ENCODE measurements at regions of chr19 and their contacts with region 1.

Region 1: GRCh38 chr19:46924874-46925547 is 64.2 kb downstream of the ARHGAP35 start:
- DNase-seq: no peak
- ATAC-seq: peak; percentile 54 to 91
- H3K4me3 ChIP-seq: no peak overlapping the region
- H3K27ac ChIP-seq: no peak overlapping the region
- H3K4me1 ChIP-seq: peaks cover 23% of the 10 kb centered on the region
- H3K27me3 ChIP-seq: no peaks in the 10 kb centered on the region

Region 2: DNA sequence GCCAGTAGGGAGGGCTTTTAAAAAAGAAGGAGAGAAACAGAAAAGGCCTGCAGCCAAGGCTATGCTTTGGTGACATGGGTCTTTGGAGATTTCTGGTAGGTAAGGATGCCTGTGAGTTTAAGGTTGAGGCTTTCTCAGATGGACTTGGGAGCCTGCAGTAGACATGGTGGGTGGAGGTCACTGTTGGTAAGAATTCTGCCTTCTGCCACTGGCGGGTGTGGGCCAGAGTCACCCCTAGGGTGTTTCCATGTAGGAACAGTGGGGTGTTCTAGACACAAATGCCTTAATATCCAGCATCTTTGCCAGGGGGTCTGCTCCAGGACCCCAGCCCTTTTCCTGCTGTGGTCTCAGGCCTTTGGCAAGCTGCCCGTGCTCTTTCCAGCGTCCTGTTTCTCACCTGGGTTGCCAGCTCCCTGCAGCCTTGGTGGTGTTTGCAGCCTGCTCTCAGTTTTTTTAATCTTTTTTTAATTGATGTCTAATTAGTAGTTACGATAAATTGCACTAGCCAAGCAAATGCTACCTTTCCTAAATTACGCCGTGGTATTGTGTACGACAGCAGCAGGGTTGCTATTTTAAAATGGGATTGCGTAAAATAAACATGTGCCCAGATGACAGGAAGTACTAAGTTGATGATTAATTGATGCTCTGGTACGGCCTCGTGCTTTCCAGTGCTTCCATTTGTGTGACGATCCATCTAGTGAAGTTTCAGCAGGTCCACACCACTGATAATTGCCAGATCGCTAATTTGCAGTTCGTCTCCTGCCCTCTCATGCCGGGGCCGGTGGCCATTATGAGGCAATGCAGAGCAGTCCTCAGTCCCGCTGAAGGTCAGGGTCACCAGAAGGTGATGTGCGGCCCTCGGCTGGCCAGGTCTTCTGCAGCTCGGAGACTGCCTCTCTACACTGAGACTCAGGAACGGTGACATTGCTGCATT is 59.3 kb after region 1 on chr19:
- intact Hi-C with region 1: loop called in 1 of 4 experiments (anchors 10 kb)
- DNase-seq: peak in 1 of 3 donors; percentile 51
- ATAC-seq: peak; percentile 25 to 61
- H3K4me3 ChIP-seq: no peak overlapping the region
- H3K27ac ChIP-seq: peak overlapping the region; percentile 60
- H3K4me1 ChIP-seq: peaks cover 19% of the 10 kb centered on the region
- H3K27me3 ChIP-seq: no peaks in the 10 kb centered on the region